ENCODE measurements at regions of chr5 and their contacts with region 1.

Region 1: GRCh38 chr5:110525762-110526161 is 200.7 kb downstream of the TMEM232 start:
- DNase-seq: no peak
- H3K4me3 ChIP-seq: no peak overlapping the region
- H3K4me3 Mint-ChIP-seq: no peak overlapping the region
- H3K27ac Mint-ChIP-seq: no peak overlapping the region
- H3K4me1 ChIP-seq: no peaks in the 10 kb centered on the region
- H3K4me1 Mint-ChIP-seq: no peaks in the 10 kb centered on the region
- H3K27me3 ChIP-seq: no peaks in the 10 kb centered on the region
- H3K27me3 Mint-ChIP-seq: no peaks in the 10 kb centered on the region
- CTCF ChIP-seq: no peak

Region 2: DNA sequence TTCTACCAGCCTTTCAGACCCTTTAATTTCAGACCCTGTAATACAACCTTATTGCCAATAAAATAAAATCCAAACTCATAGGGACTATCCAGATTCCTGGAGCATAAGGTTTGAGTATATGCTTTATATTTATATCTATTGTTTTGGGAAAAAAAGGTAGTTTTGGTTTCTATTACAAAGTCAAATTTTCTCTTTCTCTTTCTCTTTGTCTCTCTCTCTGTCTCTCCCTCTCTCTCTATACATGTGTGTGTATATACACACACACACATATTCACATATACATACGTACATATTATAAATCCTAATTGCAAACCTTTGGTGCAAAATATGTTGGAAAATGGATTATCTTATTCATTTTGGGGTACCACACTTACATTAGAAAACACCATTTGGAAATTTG is 161.7 kb after region 1 on chr5:
- CTCF ChIA-PET with region 1: no interaction called
- POLR2A ChIA-PET with region 1: interaction called, 13 read pairs
- intact Hi-C with region 1: no loop called
- DNase-seq: no peak
- H3K4me3 ChIP-seq: no peak overlapping the region
- H3K4me3 Mint-ChIP-seq: no peak overlapping the region
- H3K27ac Mint-ChIP-seq: no peak overlapping the region
- H3K4me1 ChIP-seq: no peaks in the 10 kb centered on the region
- H3K4me1 Mint-ChIP-seq: no peaks in the 10 kb centered on the region
- H3K27me3 ChIP-seq: no peaks in the 10 kb centered on the region
- H3K27me3 Mint-ChIP-seq: no peaks in the 10 kb centered on the region
- CTCF ChIP-seq: no peak

Measured in Caco-2 (cell line).